ENCODE measurements at regions of chr5 and their contacts with region 1.

Region 1: DNA sequence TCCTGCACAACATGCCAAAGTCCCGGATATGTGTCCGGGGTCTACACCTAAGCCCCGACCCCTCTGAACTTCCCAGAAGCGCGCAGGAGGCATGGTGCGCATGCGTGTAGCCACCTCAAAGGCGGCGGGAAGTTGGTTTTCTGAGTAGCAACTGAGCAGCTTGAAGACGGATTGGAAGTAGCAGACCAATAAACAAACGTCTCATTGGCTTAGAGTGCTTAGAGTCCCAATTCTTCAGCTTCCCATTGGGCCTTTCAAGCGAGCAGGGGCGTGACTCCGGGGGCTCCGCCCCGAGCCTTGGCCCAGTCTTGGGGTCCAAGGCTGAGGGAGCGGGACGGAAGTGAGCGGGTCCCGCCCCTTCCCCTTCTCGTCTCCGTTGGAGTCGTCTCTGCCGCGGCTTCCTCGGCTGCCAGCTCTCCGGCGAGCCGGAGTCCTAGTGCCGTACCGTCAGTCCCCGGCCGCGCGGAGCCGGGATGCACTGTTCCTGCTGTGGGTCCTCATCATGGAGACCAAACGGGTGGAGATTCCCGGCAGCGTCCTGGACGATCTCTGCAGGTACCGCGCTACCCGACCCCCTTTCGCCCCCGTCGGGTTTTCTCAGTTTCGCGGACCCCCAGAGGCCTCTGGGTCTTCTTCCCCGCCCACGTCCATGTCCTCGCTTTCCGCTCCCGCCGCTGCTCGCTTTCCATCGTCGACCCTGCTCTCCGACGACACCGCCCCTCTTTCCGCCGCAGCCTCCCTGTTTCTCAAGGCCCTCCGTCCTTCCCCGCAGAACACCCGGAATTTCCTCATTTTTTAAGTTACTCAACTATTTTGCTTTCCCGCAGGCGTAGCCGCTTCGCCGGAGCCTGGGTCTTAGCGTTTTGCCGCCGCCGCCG is at the start of gene DCP2:
- DNase-seq: peak; percentile 86 to 99 (median 91)

Region 2: GRCh38 chr5:112616812-112617547 is 359.7 kb before region 1 on chr5:
- intact Hi-C with region 1: no loop called
- DNase-seq: no peak

Region 3: GRCh38 chr5:112860929-112861637 is 115.6 kb before region 1 on chr5 and contains the start of gene SRP19:
- intact Hi-C with region 1: loop called (anchors 5 kb)
- DNase-seq: peak; percentile 92 to 99 (median 96)